Activated B cell treated with CpG ODN at 0.5 μM for 24 hours (primary cell): ENCODE measurements at regions of chr1 and their contacts with region 1.

Region 1: DNA sequence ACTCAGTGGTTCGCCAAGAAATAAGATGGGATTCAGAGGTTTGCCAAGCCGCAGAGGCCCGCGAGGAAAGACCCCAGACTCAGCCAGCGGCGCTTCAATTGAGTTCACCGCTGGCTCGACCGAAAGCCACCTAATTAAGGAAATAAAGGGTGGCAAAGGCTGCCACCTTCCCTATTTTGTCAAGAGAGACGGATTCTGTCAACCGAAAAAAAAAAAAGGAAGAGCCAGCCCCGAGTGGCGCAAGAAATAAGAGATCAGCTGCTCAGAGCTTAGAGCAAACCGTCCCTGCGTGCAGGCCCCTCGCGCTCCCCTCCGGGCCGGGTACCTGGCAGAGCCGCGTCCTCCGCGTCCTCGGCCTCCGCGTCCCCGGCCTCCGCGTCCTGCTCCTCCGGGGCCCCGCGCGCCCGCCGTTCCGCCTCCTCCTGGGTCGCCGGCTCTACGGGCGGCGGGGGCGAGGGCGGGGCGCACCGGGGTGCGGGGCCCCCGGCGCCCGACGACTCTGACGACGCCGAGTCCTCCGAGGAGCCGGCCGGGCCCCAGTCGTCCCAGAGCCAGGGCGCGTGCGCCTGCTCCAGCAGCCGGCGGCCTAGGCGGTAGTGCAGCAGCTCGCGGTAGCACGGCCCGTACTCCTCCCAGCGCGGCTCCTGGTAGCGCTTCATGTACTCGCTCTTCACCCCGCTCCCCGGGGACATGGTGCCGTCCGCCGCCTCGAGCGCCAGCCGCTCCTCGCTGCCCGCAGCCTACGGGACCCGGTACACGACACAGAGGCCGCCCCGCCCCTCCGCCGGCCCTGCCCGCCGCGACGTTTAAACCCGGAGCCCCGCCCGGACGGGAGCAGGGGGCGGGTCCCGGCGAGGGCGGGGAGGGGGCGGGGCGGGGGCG is 832 bp downstream of the CCSAP start:
- DNase-seq: peak; percentile 85
- ATAC-seq: peak; percentile 82
- H3K4me3 Mint-ChIP-seq: peak overlapping the region; percentile 91
- H3K27ac Mint-ChIP-seq: peak overlapping the region; percentile 80
- H3K4me1 Mint-ChIP-seq: peaks cover 38% of the 10 kb centered on the region
- H3K27me3 Mint-ChIP-seq: peaks cover 8% of the 10 kb centered on the region
- CTCF ChIP-seq: no peak

Region 2: DNA sequence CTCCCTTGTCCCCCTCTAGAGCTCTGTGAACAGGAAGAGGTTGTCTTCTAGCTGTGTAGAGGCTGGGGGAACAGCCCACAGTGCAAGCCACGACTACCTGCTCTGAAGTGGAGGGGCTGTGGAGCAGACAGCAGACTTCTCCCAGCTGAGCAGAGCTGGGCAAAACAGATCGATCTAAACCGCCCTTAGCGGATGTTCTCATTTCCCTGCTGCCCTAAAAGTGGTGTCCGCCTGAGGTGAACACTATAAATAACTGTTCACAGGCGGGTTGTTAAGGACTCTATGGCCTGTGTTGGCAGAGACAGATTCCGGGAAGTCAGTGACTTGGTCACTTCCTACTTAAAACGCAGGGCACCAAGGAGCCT is 403.5 kb before region 1 on chr1:
- CTCF ChIA-PET with region 1: no interaction called
- POLR2A ChIA-PET with region 1: no interaction called
- intact Hi-C with region 1: no loop called
- DNase-seq: no peak
- ATAC-seq: no peak
- H3K4me3 Mint-ChIP-seq: no peak overlapping the region
- H3K27ac Mint-ChIP-seq: no peak overlapping the region
- H3K4me1 Mint-ChIP-seq: no peaks in the 10 kb centered on the region
- H3K27me3 Mint-ChIP-seq: peaks cover 3% of the 10 kb centered on the region
- CTCF ChIP-seq: no peak

Region 3: DNA sequence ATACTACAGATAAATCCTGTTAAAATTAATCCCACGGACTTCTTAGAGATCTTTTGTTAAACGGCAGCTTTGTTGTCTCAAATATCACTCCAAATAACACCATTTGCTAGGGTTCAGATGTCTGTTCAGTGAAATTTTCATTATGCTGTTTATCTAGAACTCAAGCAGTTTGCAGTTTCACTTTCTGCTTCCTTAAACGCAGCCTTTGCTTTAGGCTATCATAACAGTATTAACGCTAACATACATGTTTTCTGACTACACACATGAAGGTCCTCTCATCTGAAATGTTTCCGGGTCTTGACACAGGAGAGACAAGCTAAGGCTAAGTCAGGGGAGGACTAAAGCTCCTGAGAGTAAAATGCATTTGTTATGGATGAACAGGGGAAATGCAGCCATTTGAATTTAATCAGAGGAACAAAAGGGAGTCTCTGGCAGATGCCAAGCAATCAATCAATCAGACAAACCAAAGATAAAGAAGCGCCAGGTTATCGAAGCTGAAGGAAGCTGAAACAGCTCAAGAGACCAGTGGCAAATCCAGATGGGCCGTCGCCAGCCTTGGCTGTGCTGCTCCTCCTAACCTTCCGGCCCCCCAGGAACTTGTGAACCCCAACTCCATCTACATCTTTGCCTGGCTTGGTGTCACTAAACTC is 16.0 kb before region 1 on chr1:
- CTCF ChIA-PET with region 1: no interaction called
- POLR2A ChIA-PET with region 1: interaction called, 5 read pairs
- intact Hi-C with region 1: loop called (anchors 2 kb)
- DNase-seq: no peak
- ATAC-seq: peak; percentile 33
- H3K4me3 Mint-ChIP-seq: peak overlapping the region; percentile 33
- H3K27ac Mint-ChIP-seq: peak overlapping the region; percentile 62
- H3K4me1 Mint-ChIP-seq: peaks cover 44% of the 10 kb centered on the region
- H3K27me3 Mint-ChIP-seq: no peaks in the 10 kb centered on the region
- CTCF ChIP-seq: no peak

Region 4: DNA sequence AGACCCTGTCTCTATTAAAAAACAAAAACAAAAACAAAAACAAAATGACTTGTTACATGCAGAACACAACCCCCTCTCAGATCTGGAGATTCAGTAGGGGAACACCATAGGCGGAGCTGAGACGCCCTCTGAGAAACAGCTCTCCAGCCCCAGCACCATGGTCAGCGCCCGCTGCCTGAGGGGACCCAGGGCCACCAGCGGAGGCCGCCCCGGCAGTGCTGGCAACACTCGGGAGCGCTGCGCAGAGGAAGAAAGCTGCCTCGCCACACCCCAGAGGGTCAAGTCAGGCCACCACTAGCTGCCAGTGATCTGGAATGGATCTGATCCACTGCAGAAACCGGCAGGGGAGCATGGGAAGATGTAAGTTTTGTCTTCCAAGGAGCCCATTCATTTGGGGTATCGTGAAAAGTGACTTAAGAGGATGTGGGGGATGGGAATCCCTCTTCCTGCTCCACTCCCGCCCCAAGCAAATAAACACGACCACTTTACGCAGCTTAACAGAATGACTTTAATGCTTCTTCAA is 88.8 kb after region 1 on chr1:
- CTCF ChIA-PET with region 1: no interaction called
- POLR2A ChIA-PET with region 1: no interaction called
- intact Hi-C with region 1: loop called (anchors 5 kb)
- DNase-seq: no peak
- ATAC-seq: peak; percentile 37
- H3K4me3 Mint-ChIP-seq: peak overlapping the region; percentile 77
- H3K27ac Mint-ChIP-seq: no peak overlapping the region
- H3K4me1 Mint-ChIP-seq: peaks cover 18% of the 10 kb centered on the region
- H3K27me3 Mint-ChIP-seq: peaks cover 62% of the 10 kb centered on the region
- CTCF ChIP-seq: no peak

Region 5: GRCh38 chr1:229507951-229508822 is 166.2 kb after region 1 on chr1 and contains the start of gene NUP133:
- CTCF ChIA-PET with region 1: no interaction called
- POLR2A ChIA-PET with region 1: interaction called, 7 read pairs
- intact Hi-C with region 1: loop called (anchors 1 kb)
- DNase-seq: peak; percentile 97
- ATAC-seq: peak; percentile 92
- H3K4me3 Mint-ChIP-seq: peak within 1 kb of the TSS; percentile 90
- H3K27ac Mint-ChIP-seq: peak within 1 kb of the TSS; percentile 97
- H3K4me1 Mint-ChIP-seq: peaks cover 26% of the 10 kb centered on the region
- H3K27me3 Mint-ChIP-seq: peaks cover 1% of the 10 kb centered on the region
- CTCF ChIP-seq: no peak
- total RNA-seq, gene NUP133: 49.6 and 56.2 TPM in 2 replicates

Region 6: DNA sequence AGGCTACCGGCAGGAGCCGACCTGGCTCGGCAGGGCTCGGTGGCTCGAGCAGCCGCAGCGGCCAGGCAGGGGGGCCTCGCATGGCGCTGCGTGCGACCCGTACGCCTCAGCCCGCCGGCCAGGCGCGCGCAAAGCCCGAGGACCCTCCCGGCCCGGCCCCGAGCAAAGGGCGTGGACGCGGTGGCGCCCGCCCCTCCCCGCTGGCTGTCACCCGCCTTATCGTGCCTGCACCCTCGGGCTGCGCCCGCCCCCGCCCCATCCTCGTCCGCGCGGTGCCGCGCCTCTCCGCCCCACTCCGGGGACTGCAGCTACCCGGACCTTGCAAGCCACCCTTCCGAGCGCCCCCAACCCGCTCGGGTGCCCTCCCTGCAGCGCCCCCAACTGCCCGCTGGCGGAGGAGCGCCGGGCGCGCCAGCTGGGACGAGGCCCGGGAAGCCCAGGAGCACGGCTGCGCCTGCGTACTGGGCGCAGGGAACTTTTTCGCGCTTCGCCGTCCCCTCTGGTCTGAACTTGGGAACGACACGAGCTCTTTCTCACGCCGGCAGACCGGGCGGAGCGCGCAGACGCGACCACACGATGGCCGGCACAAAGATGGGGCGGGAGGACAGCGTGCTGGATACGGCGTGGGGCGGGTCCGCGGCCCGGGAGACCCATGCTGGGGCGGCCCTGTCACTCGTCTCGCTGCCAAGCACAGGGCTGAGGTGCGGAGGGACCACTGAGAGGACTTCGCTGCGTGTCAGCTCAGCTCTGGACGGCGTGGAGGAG is 216.7 kb after region 1 on chr1 and contains the start of gene ABCB10:
- CTCF ChIA-PET with region 1: no interaction called
- POLR2A ChIA-PET with region 1: interaction called, 4 read pairs
- intact Hi-C with region 1: loop called (anchors 2 kb)
- DNase-seq: peak; percentile 91
- ATAC-seq: peak; percentile 80
- H3K4me3 Mint-ChIP-seq: peak within 1 kb of the TSS; percentile 95
- H3K27ac Mint-ChIP-seq: peak within 1 kb of the TSS; percentile 90
- H3K4me1 Mint-ChIP-seq: peaks cover 31% of the 10 kb centered on the region
- H3K27me3 Mint-ChIP-seq: no peaks in the 10 kb centered on the region
- CTCF ChIP-seq: no peak
- total RNA-seq, gene ABCB10: 11.7 and 14.5 TPM in 2 replicates

Region 7: GRCh38 chr1:229625915-229626831 is 284.2 kb after region 1 on chr1 and contains the starts of genes TAF5L and URB2:
- CTCF ChIA-PET with region 1: no interaction called
- POLR2A ChIA-PET with region 1: no interaction called
- intact Hi-C with region 1: loop called (anchors 5 kb)
- DNase-seq: peak; percentile 86
- ATAC-seq: peak; percentile 92
- H3K4me3 Mint-ChIP-seq: peak within 1 kb of the TSS; percentile 99
- H3K27ac Mint-ChIP-seq: peak within 1 kb of the TSS; percentile 92
- H3K4me1 Mint-ChIP-seq: peaks cover 58% of the 10 kb centered on the region
- H3K27me3 Mint-ChIP-seq: no peaks in the 10 kb centered on the region
- CTCF ChIP-seq: no peak
- total RNA-seq, gene TAF5L: 22.0 and 24.4 TPM in 2 replicates
- total RNA-seq, gene URB2: 17.4 and 21.8 TPM in 2 replicates